Upper lobe of right lung (tissue), 1 donor: ENCODE measurements at regions of chr3 and their contacts with region 1.

Region 1: DNA sequence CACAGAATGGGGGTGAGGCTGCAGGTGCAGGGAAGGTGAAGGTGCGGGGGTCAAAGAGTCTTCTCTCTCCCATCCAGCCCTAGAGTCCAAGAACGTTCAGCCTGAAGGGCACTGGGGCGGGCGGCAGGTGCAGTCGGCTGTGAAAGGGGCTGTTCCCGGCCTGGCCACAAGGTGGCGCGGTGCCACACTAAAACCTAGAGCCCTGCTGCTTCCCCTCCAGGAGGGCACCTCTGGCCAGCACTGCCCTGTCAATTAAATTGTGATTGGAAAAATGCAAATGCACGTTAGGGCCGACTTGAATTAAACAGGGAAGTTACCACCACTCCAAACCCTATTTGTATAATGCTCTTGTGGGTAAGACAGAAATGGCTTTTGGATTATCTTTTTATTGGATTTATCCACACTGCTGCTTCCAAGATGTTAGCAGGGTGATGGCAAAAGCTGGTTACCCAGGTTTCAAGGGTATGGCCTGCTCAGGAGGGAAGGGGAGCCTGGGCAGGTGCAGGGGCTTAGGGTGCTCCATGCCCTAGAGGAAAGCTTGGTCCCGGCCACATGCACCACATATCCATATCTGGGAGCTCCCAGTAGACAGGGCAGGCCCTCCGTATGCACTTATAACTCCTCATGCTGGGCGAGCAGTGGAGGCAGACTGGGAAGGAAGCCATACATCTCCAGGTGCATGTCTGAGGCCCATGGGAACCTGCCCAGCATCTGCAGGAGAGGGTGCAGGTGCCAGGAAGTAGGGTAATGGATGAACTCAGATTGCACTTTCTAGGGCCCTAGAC is 119.8 kb downstream of the ADCY5 start:
- DNase-seq: peak; percentile 88
- ATAC-seq: peak; percentile 88
- H3K4me3 ChIP-seq: no peak overlapping the region
- H3K27ac ChIP-seq: no peak overlapping the region
- H3K4me1 ChIP-seq: no peaks in the 10 kb centered on the region
- H3K27me3 ChIP-seq: no peaks in the 10 kb centered on the region
- CTCF ChIP-seq: peak; percentile 95

Region 2: GRCh38 chr3:123489400-123490004 is 160.5 kb after region 1 on chr3:
- intact Hi-C with region 1: loop called (anchors 5 kb)
- DNase-seq: peak; percentile 77
- ATAC-seq: peak; percentile 88
- H3K4me3 ChIP-seq: no peak overlapping the region
- H3K27ac ChIP-seq: no peak overlapping the region
- H3K4me1 ChIP-seq: no peaks in the 10 kb centered on the region
- H3K27me3 ChIP-seq: no peaks in the 10 kb centered on the region
- CTCF ChIP-seq: peak; percentile 81

Region 3: DNA sequence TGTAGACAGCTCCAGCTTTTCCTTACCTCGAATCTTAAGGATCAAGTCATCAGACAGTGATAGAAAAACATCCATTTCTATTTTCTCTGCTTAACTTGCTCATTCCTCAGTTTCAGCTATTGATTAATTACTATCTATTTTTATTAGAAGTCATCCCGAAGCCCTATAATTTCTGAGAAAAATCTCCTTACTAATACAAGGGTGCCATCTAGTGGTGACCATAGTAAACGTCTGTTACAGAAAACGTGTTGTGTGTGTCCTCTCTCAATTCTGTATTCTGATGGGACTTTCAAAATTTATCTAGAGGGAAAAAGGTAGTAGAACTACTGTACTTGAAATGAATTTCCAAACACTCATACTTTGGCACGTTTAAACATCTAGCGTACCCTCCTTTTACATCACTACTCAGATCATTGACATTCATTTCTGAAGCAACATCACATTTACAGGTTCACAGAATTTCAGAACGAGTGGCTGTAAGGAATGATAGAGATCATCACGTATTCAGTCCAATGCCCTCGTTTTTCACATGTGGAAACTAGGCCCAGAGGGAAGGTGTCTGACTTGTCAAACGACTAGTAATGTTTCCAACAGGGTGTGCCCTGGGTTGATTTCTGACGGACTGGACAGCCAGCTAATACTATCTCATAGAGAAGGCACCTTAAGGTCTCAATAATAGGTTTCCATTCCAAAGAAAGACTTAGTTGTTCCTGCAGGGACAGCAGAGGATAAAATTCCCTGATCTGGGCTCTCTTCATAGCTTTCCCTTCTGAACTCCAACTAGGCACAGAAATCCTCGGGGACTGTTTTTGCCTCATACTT is 230.2 kb after region 1 on chr3:
- intact Hi-C with region 1: loop called (anchors 10 kb)
- DNase-seq: no peak
- ATAC-seq: peak; percentile 66
- H3K4me3 ChIP-seq: no peak overlapping the region
- H3K27ac ChIP-seq: no peak overlapping the region
- H3K4me1 ChIP-seq: peaks cover 3% of the 10 kb centered on the region
- H3K27me3 ChIP-seq: no peaks in the 10 kb centered on the region
- CTCF ChIP-seq: peak; percentile 81